HEK293 (cell line): ENCODE measurements at regions of chr17 and their contacts with region 1.

Region 1: GRCh38 chr17:5297245-5297644 is 15.2 kb downstream of the RABEP1 start:
- H3K4me3 ChIP-seq: no peak overlapping the region
- H3K27ac ChIP-seq: no peak overlapping the region
- H3K4me1 ChIP-seq: peaks cover 20% of the 10 kb centered on the region
- CTCF ChIP-seq: no peak

Region 2: DNA sequence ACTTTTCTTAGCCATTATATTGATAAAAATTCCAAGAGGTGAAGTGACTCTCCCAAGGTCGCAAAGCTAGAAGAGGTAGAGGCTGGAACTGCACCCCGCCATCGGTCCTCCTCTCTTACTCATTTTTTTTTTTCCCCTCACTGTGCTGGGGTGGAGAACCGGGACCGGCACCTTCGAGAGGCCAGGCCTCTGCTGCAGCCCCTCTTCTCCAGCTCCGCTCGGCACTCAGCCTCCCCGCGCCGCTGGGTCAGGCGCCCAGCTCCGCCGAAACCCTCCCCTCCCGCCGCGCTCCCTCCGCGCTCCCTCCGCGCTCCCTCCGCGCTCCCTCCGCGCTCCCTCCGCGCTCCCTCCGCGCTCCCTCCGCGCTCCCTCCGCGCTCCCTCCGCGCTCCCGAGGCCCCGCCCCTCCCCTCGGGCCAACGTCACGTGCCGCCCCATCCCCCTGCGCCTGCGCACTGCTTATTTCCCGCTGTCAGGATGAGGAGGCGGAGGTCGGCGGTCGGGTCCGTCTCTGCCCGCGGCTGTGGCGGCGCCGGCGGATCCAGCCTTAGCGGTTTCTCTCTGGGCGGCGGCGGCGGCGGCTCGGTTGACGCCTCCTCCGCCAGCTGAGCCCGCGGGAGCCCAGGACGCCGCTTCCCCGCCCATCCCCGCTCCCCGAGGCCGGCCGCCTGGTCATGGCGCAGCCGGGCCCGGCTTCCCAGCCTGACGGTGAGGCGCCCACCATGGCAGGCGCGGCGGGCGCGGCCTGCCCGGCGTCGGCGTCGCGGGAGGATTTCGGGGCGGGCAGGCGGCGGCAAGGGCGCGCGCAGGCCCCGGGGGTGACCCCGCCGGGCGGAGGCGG is 15.2 kb before region 1 on chr17 and contains the start of gene RABEP1:
- CTCF ChIA-PET with region 1: interaction called, 3 read pairs
- POLR2A ChIA-PET with region 1: interaction called, 10 read pairs
- H3K4me3 ChIP-seq: peak within 1 kb of the TSS; percentile 75
- H3K27ac ChIP-seq: peak within 1 kb of the TSS; percentile 95
- H3K4me1 ChIP-seq: peaks cover 21% of the 10 kb centered on the region
- CTCF ChIP-seq: peak; percentile 54